Activated CD4-positive, alpha-beta memory T cell treated with anti-CD3 and anti-CD28 coated beads for 36 hours (primary cell): ENCODE measurements at regions of chr7 and their contacts with region 1.

Region 1: DNA sequence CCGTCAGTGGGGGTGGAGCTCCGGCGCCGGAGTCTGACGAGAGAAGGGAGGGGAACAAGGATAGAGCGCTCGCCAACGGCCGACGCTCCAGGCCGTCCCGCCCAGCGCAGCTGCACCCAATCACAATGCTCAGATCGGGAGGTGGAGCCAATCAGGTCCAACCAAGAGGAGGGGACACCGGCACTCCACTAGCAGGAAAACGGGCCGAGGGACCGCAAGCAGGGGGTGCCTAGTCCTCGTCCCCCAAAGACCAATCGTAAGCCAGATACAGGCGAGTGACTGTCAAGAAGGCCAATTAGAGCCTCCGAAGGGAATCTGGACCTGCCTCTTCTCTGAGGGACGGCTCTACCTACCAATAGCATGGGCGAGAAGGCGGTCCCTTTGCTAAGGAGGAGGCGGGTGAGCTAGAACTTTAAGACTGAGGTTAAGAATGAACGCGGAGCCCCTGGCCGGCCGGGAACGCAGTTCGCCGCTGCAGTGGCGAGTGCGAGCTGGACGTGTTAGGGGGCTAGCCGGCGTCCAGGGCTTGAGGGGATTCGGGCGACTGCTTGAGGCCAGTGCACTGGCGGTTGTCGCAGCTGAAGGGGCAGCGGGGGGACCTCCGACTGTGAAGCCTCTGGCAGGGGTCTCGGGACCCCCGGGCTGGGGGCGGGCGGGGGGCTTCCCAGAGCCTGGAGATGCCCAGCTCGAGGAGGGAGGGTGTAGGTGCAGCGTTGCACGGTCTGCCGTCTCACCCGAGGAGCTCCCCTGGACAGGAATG is at the start of gene FBXO24:
- DNase-seq: peak; percentile 100
- H3K4me3 Mint-ChIP-seq: peak within 1 kb of the TSS; percentile 85
- H3K27ac Mint-ChIP-seq: peak within 1 kb of the TSS; percentile 98
- H3K4me1 Mint-ChIP-seq: peaks cover 20% of the 10 kb centered on the region
- H3K27me3 Mint-ChIP-seq: peaks cover 2% of the 10 kb centered on the region
- total RNA-seq, gene FBXO24: 2.2 to 2.6 TPM

Region 2: GRCh38 chr7:100469227-100470044 is 117.0 kb before region 1 on chr7:
- CTCF ChIA-PET with region 1: interaction called, 10 read pairs
- POLR2A ChIA-PET with region 1: no interaction called
- intact Hi-C with region 1: no loop called
- DNase-seq: peak; percentile 88
- H3K4me3 Mint-ChIP-seq: no peak overlapping the region
- H3K27ac Mint-ChIP-seq: peak overlapping the region; percentile 45
- H3K4me1 Mint-ChIP-seq: peaks cover 27% of the 10 kb centered on the region
- H3K27me3 Mint-ChIP-seq: no peaks in the 10 kb centered on the region

Region 3: GRCh38 chr7:100545360-100546128 is 40.9 kb before region 1 on chr7:
- CTCF ChIA-PET with region 1: interaction called, 3 read pairs
- POLR2A ChIA-PET with region 1: interaction called, 5 read pairs
- intact Hi-C with region 1: loop called (anchors 1 kb)
- DNase-seq: peak; percentile 85
- H3K4me3 Mint-ChIP-seq: peak overlapping the region; percentile 72
- H3K27ac Mint-ChIP-seq: peak overlapping the region; percentile 98
- H3K4me1 Mint-ChIP-seq: peaks cover 94% of the 10 kb centered on the region
- H3K27me3 Mint-ChIP-seq: no peaks in the 10 kb centered on the region

Region 4: GRCh38 chr7:100604028-100604975 is 17.9 kb after region 1 on chr7:
- CTCF ChIA-PET with region 1: interaction called, 13 read pairs
- POLR2A ChIA-PET with region 1: interaction called, 5 read pairs
- intact Hi-C with region 1: loop called (anchors 1 kb)
- DNase-seq: peak; percentile 85
- H3K4me3 Mint-ChIP-seq: peak overlapping the region; percentile 80
- H3K27ac Mint-ChIP-seq: peak overlapping the region; percentile 52
- H3K4me1 Mint-ChIP-seq: peaks cover 18% of the 10 kb centered on the region
- H3K27me3 Mint-ChIP-seq: no peaks in the 10 kb centered on the region

Region 5: GRCh38 chr7:100632951-100633717 is 46.7 kb after region 1 on chr7:
- CTCF ChIA-PET with region 1: interaction called, 24 read pairs
- POLR2A ChIA-PET with region 1: interaction called, 4 read pairs
- intact Hi-C with region 1: no loop called
- DNase-seq: peak; percentile 78
- H3K4me3 Mint-ChIP-seq: peak overlapping the region; percentile 77
- H3K27ac Mint-ChIP-seq: peak overlapping the region; percentile 82
- H3K4me1 Mint-ChIP-seq: peaks cover 12% of the 10 kb centered on the region
- H3K27me3 Mint-ChIP-seq: peaks cover 3% of the 10 kb centered on the region

Region 6: DNA sequence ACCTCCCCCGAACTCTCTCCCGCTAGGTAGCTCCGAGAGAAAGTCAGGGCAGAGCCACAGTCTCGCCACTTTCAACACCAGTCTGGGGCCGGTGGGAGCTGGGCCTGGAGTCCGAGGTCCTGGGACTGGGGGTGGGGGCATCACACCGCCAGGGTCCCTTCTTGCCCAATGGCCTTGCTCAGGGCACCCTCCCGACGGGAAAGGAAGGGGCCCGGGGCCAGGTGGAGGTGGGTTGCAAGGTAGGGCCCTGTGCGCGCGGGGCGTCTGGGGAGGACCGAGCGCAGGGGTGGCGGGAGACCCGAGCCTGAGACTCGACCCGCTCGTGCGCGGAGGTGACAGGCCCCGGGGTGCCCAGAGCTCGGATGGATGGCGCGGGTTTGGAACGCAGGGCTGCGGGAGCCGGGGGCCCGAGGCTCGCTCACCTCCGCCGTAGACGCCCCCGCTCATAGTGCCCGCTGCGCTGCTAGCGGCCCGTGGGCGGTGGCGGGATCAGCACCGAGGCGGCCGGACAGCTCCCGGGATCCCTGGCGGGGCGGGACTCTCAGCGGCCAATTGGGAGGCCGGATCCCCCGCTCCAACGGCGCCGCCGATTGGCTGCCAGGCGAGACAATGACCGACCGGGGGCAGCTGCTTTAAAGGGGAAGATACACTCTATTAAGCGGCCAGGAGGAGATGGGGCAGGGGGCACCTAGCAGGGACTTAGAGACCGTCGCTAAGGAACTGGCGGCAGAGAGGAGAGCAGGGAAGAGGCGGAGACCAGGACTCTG is 69.6 kb after region 1 on chr7 and contains the start of gene ACTL6B:
- CTCF ChIA-PET with region 1: no interaction called
- POLR2A ChIA-PET with region 1: no interaction called
- intact Hi-C with region 1: no loop called
- DNase-seq: peak; percentile 74
- H3K4me3 Mint-ChIP-seq: no peak within 1 kb of the TSS
- H3K27ac Mint-ChIP-seq: no peak within 1 kb of the TSS
- H3K4me1 Mint-ChIP-seq: no peaks in the 10 kb centered on the region
- H3K27me3 Mint-ChIP-seq: peaks cover 34% of the 10 kb centered on the region
- total RNA-seq, gene ACTL6B: not detected

Region 7: DNA sequence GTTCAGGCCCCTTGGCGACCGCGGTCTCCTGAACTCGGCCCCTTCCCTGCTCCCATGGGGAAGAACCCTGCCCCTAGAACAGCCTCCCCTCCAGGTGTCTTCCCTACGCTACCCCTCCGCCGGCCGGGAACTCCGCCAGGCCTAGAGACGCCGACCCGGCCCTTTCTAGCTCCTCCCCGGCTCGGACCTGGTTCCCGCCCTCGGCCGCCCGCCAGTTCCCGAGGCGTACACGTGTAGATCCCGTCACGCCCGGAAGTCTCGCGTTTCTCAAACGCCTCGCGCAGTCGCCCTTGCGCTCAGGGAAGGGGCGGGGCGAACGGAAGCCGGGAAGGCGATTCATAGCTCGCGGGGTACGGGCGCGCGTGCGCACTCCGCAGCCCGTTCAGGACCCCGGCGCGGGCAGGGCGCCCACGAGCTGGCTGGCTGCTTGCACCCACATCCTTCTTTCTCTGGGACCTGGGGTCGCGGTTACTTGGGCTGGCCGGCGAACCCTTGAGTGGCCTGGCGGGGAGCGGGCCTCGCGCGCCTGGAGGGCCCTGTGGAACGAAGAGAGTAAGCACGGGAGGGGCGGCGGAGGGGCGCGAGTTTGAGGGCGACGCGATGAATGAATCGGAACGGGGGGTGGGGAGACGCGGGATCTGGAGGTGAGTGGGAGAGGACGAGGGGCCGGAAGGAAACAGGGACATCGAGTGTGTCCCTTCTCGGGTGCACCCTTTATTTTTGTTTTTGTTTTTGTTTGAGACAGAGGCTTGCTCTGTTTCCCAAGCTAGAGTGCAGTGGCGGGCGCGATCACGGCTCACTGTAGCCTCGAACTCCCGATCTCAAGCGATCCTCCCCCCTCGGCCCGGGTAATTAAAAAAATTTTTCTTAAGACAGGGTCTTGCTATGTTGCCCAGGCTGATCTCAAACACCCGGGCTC is 119.6 kb after region 1 on chr7 and contains the start of gene POP7:
- CTCF ChIA-PET with region 1: interaction called, 24 read pairs
- POLR2A ChIA-PET with region 1: interaction called, 9 read pairs
- intact Hi-C with region 1: no loop called
- DNase-seq: peak; percentile 99
- H3K4me3 Mint-ChIP-seq: peak within 1 kb of the TSS; percentile 90
- H3K27ac Mint-ChIP-seq: peak within 1 kb of the TSS; percentile 88
- H3K4me1 Mint-ChIP-seq: peaks cover 14% of the 10 kb centered on the region
- H3K27me3 Mint-ChIP-seq: no peaks in the 10 kb centered on the region
- total RNA-seq, gene POP7: 38.7 to 42.2 TPM